CD8-positive, alpha-beta T cell (primary cell): ENCODE measurements at regions of chr11 and their contacts with region 1.

Region 1: DNA sequence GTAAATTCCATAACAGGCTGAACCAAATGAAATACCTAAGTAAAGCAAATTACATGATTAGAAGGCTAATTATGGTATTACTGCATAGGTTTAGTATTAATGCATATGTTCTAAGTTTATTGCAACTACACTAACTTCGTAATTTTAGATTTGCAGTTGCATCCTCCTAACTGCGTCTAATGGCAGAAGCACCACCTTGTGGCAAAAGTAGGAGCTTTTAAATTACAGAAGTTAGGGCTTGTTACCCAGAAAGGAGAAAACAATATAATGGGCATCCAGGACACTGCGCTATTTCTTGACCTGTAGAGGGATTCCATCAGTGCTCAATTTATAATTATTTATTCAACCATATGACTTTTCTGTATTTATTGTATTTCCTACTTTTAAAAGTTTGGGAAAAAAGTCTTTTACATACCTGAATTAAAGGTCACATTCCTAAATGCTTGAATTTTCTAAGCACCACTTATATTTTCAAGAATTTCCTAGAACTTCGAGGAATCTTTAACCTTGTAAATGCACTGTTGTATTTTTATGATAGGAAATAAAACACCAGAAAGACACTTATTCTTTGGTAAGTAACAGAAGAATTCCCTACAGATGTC is 16.3 kb upstream of the GPR83 start:
- DNase-seq: peak in 1 of 9 experiments; percentile 6
- ATAC-seq: no peak
- H3K4me3 ChIP-seq: no peak overlapping the region
- H3K4me3 Mint-ChIP-seq: no peak overlapping the region
- H3K27ac ChIP-seq: no peak overlapping the region
- H3K27ac Mint-ChIP-seq: no peak overlapping the region
- H3K4me1 ChIP-seq: no peaks in the 10 kb centered on the region
- H3K4me1 Mint-ChIP-seq: no peaks in the 10 kb centered on the region
- H3K27me3 ChIP-seq: no peaks in the 10 kb centered on the region
- H3K27me3 Mint-ChIP-seq: no peaks in the 10 kb centered on the region
- CTCF ChIP-seq: no peak

Region 2: GRCh38 chr11:93895106-93895862 is 522.2 kb before region 1 on chr11:
- CTCF ChIA-PET with region 1: interaction called, 5 read pairs
- POLR2A ChIA-PET with region 1: no interaction called
- intact Hi-C with region 1: loop called in 1 of 2 experiments (anchors 5 kb)
- DNase-seq: peak in 3 of 9 experiments; percentile 10 to 52 (median 44)
- ATAC-seq: no peak
- H3K4me3 ChIP-seq: no peak overlapping the region
- H3K4me3 Mint-ChIP-seq: no peak overlapping the region
- H3K27ac ChIP-seq: no peak overlapping the region
- H3K27ac Mint-ChIP-seq: no peak overlapping the region
- H3K4me1 ChIP-seq: no peaks in the 10 kb centered on the region
- H3K4me1 Mint-ChIP-seq: no peaks in the 10 kb centered on the region
- H3K27me3 ChIP-seq: peaks cover 0 to 2% of the 10 kb centered on the region in 2 experiments
- H3K27me3 Mint-ChIP-seq: peaks cover 41% of the 10 kb centered on the region
- CTCF ChIP-seq: peak; percentile 30

Region 3: DNA sequence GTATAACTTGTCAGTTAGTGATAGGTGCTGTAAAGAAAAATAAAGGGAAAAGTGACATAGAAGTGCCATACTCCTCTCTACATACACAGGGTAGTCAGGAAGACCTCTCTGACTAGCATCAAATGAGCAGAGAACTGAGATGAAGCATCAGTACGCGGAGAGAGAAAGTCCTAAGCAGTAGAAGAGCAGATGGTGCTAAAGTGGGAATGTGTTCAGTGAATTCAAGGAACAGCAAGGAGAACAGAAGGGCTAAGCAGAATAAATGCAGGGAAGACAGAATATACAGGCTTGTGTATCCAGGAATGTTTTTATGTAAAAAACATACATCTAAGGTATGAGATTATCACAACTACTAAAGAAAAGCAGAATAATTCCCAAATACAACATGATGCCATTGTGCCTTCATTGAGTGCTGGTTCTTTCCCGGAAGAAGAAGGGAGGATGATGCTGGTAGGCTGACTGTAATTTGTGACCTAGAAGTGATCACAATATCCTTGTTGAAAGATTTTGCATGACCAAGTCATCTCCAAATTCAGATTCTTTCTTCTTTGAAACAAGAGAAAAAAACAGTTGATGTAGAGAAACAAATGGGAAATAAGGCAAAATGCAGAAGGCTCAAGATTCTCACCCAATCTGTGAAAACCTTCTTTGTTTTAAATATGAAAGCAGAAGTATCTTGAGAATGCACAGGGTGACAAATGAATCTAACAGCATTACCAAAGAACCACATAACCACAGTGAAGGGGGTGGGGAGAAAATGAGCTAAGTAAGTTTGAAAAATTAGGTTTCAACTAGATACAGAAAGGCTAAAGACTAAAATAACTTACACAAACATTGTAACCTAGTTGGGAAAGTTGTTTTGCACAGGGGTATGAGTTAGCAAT is 55.7 kb after region 1 on chr11:
- CTCF ChIA-PET with region 1: no interaction called
- POLR2A ChIA-PET with region 1: no interaction called
- intact Hi-C with region 1: no loop called
- DNase-seq: peak in 3 of 9 experiments; percentile 11 to 70 (median 51)
- ATAC-seq: peak; percentile 34
- H3K4me3 ChIP-seq: no peak overlapping the region
- H3K4me3 Mint-ChIP-seq: no peak overlapping the region
- H3K27ac ChIP-seq: peak overlapping the region in 1 of 2 experiments; percentile 47
- H3K27ac Mint-ChIP-seq: no peak overlapping the region
- H3K4me1 ChIP-seq: no peaks in the 10 kb centered on the region
- H3K4me1 Mint-ChIP-seq: peaks cover 17% of the 10 kb centered on the region
- H3K27me3 ChIP-seq: no peaks in the 10 kb centered on the region
- H3K27me3 Mint-ChIP-seq: no peaks in the 10 kb centered on the region
- CTCF ChIP-seq: no peak